CD14-positive monocyte (primary cell): ENCODE measurements at regions of chr11 and their contacts with region 1.

Region 1: GRCh38 chr11:3074912-3075589 is 17.8 kb upstream of the CARS1 start:
- DNase-seq: no peak
- H3K4me3 ChIP-seq: no peak overlapping the region
- H3K4me3 Mint-ChIP-seq: no peak overlapping the region
- H3K27ac ChIP-seq: no peak overlapping the region
- H3K27ac Mint-ChIP-seq: no peak overlapping the region
- H3K4me1 ChIP-seq: no peaks in the 10 kb centered on the region
- H3K4me1 Mint-ChIP-seq: no peaks in the 10 kb centered on the region
- H3K27me3 ChIP-seq: no peaks in the 10 kb centered on the region
- H3K27me3 Mint-ChIP-seq: peaks cover 6 to 23% (median 7%) of the 10 kb centered on the region in 3 donors
- CTCF ChIP-seq: no peak

Region 2: GRCh38 chr11:2674658-2675131 is 400.4 kb before region 1 on chr11:
- intact Hi-C with region 1: loop called in 1 of 2 experiments (anchors 5 kb)
- DNase-seq: no peak
- H3K4me3 ChIP-seq: no peak overlapping the region
- H3K4me3 Mint-ChIP-seq: no peak overlapping the region
- H3K27ac ChIP-seq: no peak overlapping the region
- H3K27ac Mint-ChIP-seq: no peak overlapping the region
- H3K4me1 ChIP-seq: peaks cover 18 to 20% of the 10 kb centered on the region in 2 donors
- H3K4me1 Mint-ChIP-seq: peaks cover 23% of the 10 kb centered on the region
- H3K27me3 ChIP-seq: no peaks in the 10 kb centered on the region
- H3K27me3 Mint-ChIP-seq: peaks cover 0 to 3% (median 2%) of the 10 kb centered on the region in 3 donors
- CTCF ChIP-seq: no peak

Region 3: DNA sequence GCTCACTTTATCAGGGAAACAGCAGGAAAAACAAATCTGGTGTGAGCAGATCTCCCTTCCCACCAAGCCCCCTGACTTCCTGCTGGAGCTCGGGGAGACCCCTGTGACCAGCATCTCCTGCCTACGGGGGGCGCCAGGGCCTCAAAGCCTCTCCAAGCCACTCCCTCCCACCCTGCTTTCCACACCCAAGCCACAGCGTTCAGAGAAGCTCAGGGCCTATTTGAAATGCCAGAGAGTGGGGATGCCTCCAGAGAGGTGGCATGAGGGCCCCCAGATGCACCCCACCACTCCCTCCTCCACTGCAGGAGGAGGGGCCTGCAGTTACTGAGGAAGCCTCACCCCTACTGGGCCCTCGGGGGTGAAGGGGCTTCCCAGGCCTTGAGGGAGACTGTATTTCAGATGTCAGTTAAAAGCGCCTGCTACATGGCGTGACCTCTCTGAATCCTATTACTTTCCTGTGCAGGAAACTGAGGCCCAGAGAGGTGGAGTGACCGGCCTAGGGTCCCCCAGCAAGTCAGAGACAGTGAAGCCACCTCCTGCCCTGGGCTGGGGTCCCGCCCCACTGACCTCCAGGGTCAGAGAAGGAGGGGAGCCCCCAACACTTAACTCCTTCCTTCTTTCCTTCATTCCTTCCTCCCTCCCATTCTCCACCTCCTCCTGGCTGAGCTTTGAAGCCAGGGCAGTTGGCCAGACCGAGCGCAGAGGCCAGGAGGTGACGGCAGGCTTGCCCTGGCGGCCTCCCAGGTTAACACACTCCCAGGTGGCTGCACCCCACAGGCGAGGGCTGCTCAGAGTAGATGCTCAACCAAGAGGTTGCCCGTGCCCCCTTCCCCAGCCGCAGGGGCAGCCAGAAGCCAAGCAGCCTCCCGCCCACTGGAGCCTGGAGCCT is 183.5 kb before region 1 on chr11:
- intact Hi-C with region 1: no loop called
- DNase-seq: no peak
- H3K4me3 ChIP-seq: peak overlapping the region in 2 of 3 experiments; percentile 49 to 77
- H3K4me3 Mint-ChIP-seq: peak overlapping the region; percentile 72 to 80
- H3K27ac ChIP-seq: peak overlapping the region in 1 of 2 donors; percentile 68
- H3K27ac Mint-ChIP-seq: peak overlapping the region in 3 of 7 donors; percentile 9 to 59 (median 56)
- H3K4me1 ChIP-seq: peaks cover 19 to 24% of the 10 kb centered on the region in 2 donors
- H3K4me1 Mint-ChIP-seq: peaks cover 25% of the 10 kb centered on the region
- H3K27me3 ChIP-seq: peaks cover 0 to 16% of the 10 kb centered on the region in 2 donors
- H3K27me3 Mint-ChIP-seq: peaks cover 18 to 34% (median 21%) of the 10 kb centered on the region in 3 donors
- CTCF ChIP-seq: no peak

Region 4: GRCh38 chr11:2901854-2902783 is 172.9 kb before region 1 on chr11:
- intact Hi-C with region 1: no loop called
- DNase-seq: peak; percentile 96
- H3K4me3 ChIP-seq: peak overlapping the region; percentile 57 to 86 (median 84)
- H3K4me3 Mint-ChIP-seq: peak overlapping the region; percentile 74 to 79
- H3K27ac ChIP-seq: peak overlapping the region; percentile 80 to 98
- H3K27ac Mint-ChIP-seq: peak overlapping the region; percentile 81 to 97 (median 90)
- H3K4me1 ChIP-seq: peaks cover 59 to 67% of the 10 kb centered on the region in 2 donors
- H3K4me1 Mint-ChIP-seq: peaks cover 56% of the 10 kb centered on the region
- H3K27me3 ChIP-seq: no peaks in the 10 kb centered on the region
- H3K27me3 Mint-ChIP-seq: peaks cover 0 to 9% (median 5%) of the 10 kb centered on the region in 3 donors
- CTCF ChIP-seq: no peak

Region 5: GRCh38 chr11:2992234-2992996 is 82.6 kb before region 1 on chr11 and contains the start of gene NAP1L4:
- intact Hi-C with region 1: no loop called
- DNase-seq: peak; percentile 93 to 96 (median 93)
- H3K4me3 ChIP-seq: peak within 1 kb of the TSS; percentile 75 to 90 (median 86)
- H3K4me3 Mint-ChIP-seq: peak within 1 kb of the TSS; percentile 97 to 99
- H3K27ac ChIP-seq: peak within 1 kb of the TSS; percentile 83 to 87
- H3K27ac Mint-ChIP-seq: peak within 1 kb of the TSS; percentile 94 to 99 (median 98)
- H3K4me1 ChIP-seq: peaks cover 38 to 48% of the 10 kb centered on the region in 2 donors
- H3K4me1 Mint-ChIP-seq: peaks cover 45% of the 10 kb centered on the region
- H3K27me3 ChIP-seq: no peaks in the 10 kb centered on the region
- H3K27me3 Mint-ChIP-seq: peaks cover 0 to 2% (median 1%) of the 10 kb centered on the region in 3 donors
- CTCF ChIP-seq: no peak
- polyA plus RNA-seq, gene NAP1L4: 42.1 to 44.9 (median 44.9) TPM

Region 6: GRCh38 chr11:3359092-3359824 is 284.2 kb after region 1 on chr11:
- intact Hi-C with region 1: no loop called
- DNase-seq: no peak
- H3K4me3 ChIP-seq: peak overlapping the region in 1 of 3 experiments; percentile 49
- H3K4me3 Mint-ChIP-seq: no peak overlapping the region
- H3K27ac ChIP-seq: no peak overlapping the region
- H3K27ac Mint-ChIP-seq: no peak overlapping the region
- H3K4me1 ChIP-seq: no peaks in the 10 kb centered on the region
- H3K4me1 Mint-ChIP-seq: no peaks in the 10 kb centered on the region
- H3K27me3 ChIP-seq: no peaks in the 10 kb centered on the region
- H3K27me3 Mint-ChIP-seq: peaks cover 0 to 5% (median 0%) of the 10 kb centered on the region in 3 donors
- CTCF ChIP-seq: no peak